Right ventricle myocardium inferior (tissue), 1 donor: ENCODE measurements at regions of chr2 and their contacts with region 1.

Region 1: DNA sequence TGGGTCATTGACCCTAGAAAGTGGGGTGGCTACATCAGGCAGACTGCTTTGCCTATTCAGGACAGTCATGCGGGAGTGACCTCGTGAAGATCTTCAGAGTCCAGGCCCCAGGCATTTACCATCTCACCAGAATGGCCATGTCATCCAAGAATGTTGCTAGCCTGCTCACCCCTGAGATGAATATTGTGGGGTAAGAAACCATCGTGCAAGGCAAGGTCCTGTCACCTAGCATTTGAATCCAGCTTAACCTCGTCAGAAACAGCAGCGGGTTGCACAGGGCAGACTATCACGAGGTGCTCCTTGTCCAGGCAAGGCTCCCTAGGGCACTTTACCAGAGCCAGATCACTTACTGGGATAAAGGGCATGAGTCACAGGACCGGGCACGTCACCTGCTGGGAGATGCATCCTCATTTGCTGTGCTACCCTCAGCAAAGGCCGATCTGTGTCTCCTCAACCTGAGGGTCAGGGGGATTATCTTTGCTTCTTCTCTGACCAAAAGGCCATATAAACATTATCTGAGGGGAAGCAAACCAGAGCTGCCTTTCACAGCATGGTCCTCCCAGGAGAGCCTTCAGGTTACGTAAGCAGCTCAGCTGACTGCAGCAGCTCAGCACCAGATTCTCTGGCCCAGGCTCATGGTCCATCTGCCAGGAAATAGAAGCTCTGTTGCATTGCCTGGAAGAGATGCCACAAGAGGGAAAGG is 162.4 kb downstream of the ACKR3 start:
- DNase-seq: peak; percentile 86
- ATAC-seq: peak; percentile 96

Region 2: GRCh38 chr2:236631281-236631855 is 100.7 kb before region 1 on chr2:
- intact Hi-C with region 1: loop called (anchors 1 kb)
- DNase-seq: no peak
- ATAC-seq: peak; percentile 29